ENCODE measurements at regions of chr3 and their contacts with region 1.

Region 1: GRCh38 chr3:73432023-73432705 is 192.6 kb downstream of the PDZRN3 start:
- DNase-seq: no peak
- ATAC-seq: peak in 1 of 4 donors; percentile 47
- H3K4me3 ChIP-seq: no peak overlapping the region
- H3K27ac ChIP-seq: peak overlapping the region in 1 of 12 donors; percentile 21
- H3K4me1 ChIP-seq: peaks cover 0 to 49% (median 13%) of the 10 kb centered on the region in 12 donors
- H3K27me3 ChIP-seq: no peaks in the 10 kb centered on the region
- CTCF ChIP-seq: peak; percentile 49 to 76 (median 65)
- POLR2A ChIP-seq: no peak

Region 2: GRCh38 chr3:73100741-73101559 is 331.2 kb before region 1 on chr3:
- intact Hi-C with region 1: loop called in 9 of 10 experiments (anchors 1 to 5 kb)
- DNase-seq: peak in 4 of 5 donors; percentile 70 to 80 (median 76)
- ATAC-seq: peak; percentile 65 to 87 (median 79)
- H3K4me3 ChIP-seq: no peak overlapping the region
- H3K27ac ChIP-seq: no peak overlapping the region
- H3K4me1 ChIP-seq: peaks cover 0 to 8% (median 1%) of the 10 kb centered on the region in 12 donors
- H3K27me3 ChIP-seq: no peaks in the 10 kb centered on the region
- CTCF ChIP-seq: peak; percentile 84 to 96 (median 91)
- POLR2A ChIP-seq: no peak

Region 3: DNA sequence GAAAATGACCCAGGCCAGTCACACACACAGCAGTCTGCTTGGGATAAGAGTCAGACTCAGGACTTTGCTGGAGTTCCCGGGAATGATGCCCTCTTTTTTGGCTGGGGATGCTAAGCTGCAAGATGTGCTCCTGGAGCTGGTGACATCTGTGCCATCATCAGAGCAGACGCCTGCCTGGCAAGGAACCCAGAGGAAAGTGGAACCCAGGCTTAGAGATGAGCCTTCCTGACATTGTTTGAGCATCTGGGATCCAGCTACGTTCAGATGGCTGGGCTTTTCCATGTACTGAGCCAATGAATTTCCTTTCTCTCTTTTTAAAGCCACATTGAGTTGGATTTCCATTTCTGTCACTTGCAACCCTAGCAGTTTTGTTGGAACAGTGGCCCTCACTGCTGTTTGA is 317.5 kb before region 1 on chr3:
- intact Hi-C with region 1: loop called in 1 of 10 experiments (anchors 5 kb)
- DNase-seq: no peak
- ATAC-seq: no peak
- H3K4me3 ChIP-seq: no peak overlapping the region
- H3K27ac ChIP-seq: no peak overlapping the region
- H3K4me1 ChIP-seq: peaks cover 0 to 4% (median 0%) of the 10 kb centered on the region in 12 donors
- H3K27me3 ChIP-seq: no peaks in the 10 kb centered on the region
- CTCF ChIP-seq: no peak
- POLR2A ChIP-seq: no peak

Region 4: GRCh38 chr3:73409118-73409763 is 22.9 kb before region 1 on chr3:
- intact Hi-C with region 1: no loop called
- DNase-seq: no peak
- ATAC-seq: no peak
- H3K4me3 ChIP-seq: no peak overlapping the region
- H3K27ac ChIP-seq: no peak overlapping the region
- H3K4me1 ChIP-seq: peaks cover 0 to 51% (median 10%) of the 10 kb centered on the region in 12 donors
- H3K27me3 ChIP-seq: no peaks in the 10 kb centered on the region
- CTCF ChIP-seq: no peak
- POLR2A ChIP-seq: no peak

Region 5: GRCh38 chr3:73471986-73472787 is 40.0 kb after region 1 on chr3:
- intact Hi-C with region 1: no loop called
- DNase-seq: no peak
- ATAC-seq: peak; percentile 14 to 55 (median 42)
- H3K4me3 ChIP-seq: no peak overlapping the region
- H3K27ac ChIP-seq: peak overlapping the region in 6 of 12 donors; percentile 2 to 62 (median 27)
- H3K4me1 ChIP-seq: peaks cover 0 to 51% (median 13%) of the 10 kb centered on the region in 12 donors
- H3K27me3 ChIP-seq: no peaks in the 10 kb centered on the region
- CTCF ChIP-seq: no peak
- POLR2A ChIP-seq: no peak

Region 6: DNA sequence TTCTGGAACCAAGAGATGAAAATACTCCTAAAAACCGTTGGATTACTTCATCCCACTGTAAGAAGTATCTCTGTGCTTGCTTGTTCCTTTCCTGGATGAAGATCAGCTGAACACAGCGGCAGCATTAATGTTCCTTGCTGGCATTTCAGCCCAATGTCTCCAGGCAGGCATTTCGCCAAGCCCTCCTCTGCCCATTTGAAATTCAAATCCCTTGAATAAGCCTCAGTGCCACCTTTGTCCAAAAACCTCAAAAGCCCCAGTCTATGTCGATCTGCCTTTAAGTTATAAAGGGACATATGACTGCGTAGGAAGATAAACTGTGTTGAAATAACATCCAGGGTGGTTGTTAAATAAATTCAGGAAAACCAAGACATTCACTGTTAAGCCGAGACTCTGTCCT is 349.4 kb after region 1 on chr3:
- intact Hi-C with region 1: no loop called
- DNase-seq: no peak
- ATAC-seq: no peak
- H3K4me3 ChIP-seq: no peak overlapping the region
- H3K27ac ChIP-seq: no peak overlapping the region
- H3K4me1 ChIP-seq: peaks cover 0 to 9% (median 0%) of the 10 kb centered on the region in 12 donors
- H3K27me3 ChIP-seq: no peaks in the 10 kb centered on the region
- CTCF ChIP-seq: no peak
- POLR2A ChIP-seq: no peak